Activated naive CD8-positive, alpha-beta T cell treated with anti-CD3 and anti-CD28 coated beads, Interleukin-2, amount 10 ng/mL, durations not matched to agents 7 days and 5 days (primary cell): ENCODE measurements at regions of chr10 and their contacts with region 1.

Region 1: GRCh38 chr10:79286318-79286951 is 60.8 kb upstream of the PPIF start:
- DNase-seq: peak; percentile 82
- ATAC-seq: peak; percentile 95
- H3K4me3 Mint-ChIP-seq: peak overlapping the region; percentile 59
- H3K27ac Mint-ChIP-seq: peak overlapping the region; percentile 86
- H3K4me1 Mint-ChIP-seq: peaks cover 45% of the 10 kb centered on the region
- H3K27me3 Mint-ChIP-seq: no peaks in the 10 kb centered on the region

Region 2: GRCh38 chr10:78944723-78945312 is 341.6 kb before region 1 on chr10:
- POLR2A ChIA-PET with region 1: no interaction called
- DNase-seq: no peak
- ATAC-seq: peak; percentile 22
- H3K4me3 Mint-ChIP-seq: no peak overlapping the region
- H3K27ac Mint-ChIP-seq: no peak overlapping the region
- H3K4me1 Mint-ChIP-seq: no peaks in the 10 kb centered on the region
- H3K27me3 Mint-ChIP-seq: peaks cover 2% of the 10 kb centered on the region

Region 3: GRCh38 chr10:79266543-79267312 is 19.7 kb before region 1 on chr10:
- POLR2A ChIA-PET with region 1: no interaction called
- DNase-seq: no peak
- ATAC-seq: no peak
- H3K4me3 Mint-ChIP-seq: no peak overlapping the region
- H3K27ac Mint-ChIP-seq: peak overlapping the region; percentile 40
- H3K4me1 Mint-ChIP-seq: peaks cover 16% of the 10 kb centered on the region
- H3K27me3 Mint-ChIP-seq: no peaks in the 10 kb centered on the region

Region 4: GRCh38 chr10:79322616-79323543 is 36.4 kb after region 1 on chr10:
- POLR2A ChIA-PET with region 1: interaction called, 12 read pairs
- DNase-seq: peak; percentile 75
- ATAC-seq: peak; percentile 89
- H3K4me3 Mint-ChIP-seq: peak overlapping the region; percentile 77
- H3K27ac Mint-ChIP-seq: peak overlapping the region; percentile 97
- H3K4me1 Mint-ChIP-seq: peaks cover 61% of the 10 kb centered on the region
- H3K27me3 Mint-ChIP-seq: no peaks in the 10 kb centered on the region